ENCODE measurements at regions of chr9 and their contacts with region 1.

Region 1: DNA sequence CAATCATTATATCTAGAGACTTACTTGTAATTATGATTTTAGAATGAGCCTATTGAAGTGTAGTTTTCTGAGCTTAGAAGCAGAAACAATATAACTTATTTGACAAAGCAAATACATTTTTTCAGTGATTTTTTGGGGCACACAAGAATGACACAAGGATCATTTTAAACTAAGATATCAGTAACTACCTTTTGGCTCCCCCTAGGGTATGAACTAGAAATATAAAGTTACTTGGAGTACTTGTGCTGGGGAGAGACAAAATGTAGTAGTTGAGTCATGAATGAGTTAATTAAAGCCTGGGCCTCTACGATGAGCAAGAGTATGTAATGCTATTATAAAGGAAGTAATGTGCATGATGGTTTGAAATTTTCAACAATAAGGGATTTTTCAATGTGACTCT is 1244.1 kb upstream of the ACO1 start:
- DNase-seq: no peak
- ATAC-seq: no peak
- H3K4me3 ChIP-seq: no peak overlapping the region
- H3K27ac ChIP-seq: no peak overlapping the region
- H3K4me1 ChIP-seq: no peaks in the 10 kb centered on the region
- H3K27me3 ChIP-seq: no peaks in the 10 kb centered on the region
- CTCF ChIP-seq: no peak

Region 2: DNA sequence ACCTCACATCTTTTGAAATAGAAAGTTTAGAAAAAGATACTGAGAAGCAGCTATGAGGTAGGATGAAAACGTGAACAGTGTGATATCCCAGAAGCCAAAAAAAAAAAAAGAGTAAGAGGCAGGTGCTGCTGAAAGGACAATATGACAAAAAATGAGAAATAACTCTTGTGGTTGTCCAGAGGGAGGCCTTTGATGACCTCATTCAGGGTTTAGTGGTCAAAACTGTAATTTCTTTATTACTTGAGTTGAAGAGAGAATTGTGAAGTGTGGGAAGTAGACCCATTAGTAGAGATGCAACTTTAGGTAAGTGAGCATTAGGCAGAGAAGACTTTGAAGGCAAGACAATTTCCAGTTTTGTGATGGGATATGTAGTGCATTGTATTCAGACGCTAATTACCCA is 62.1 kb before region 1 on chr9:
- intact Hi-C with region 1: loop called in 1 of 2 experiments (anchors 2 kb)
- DNase-seq: no peak
- ATAC-seq: no peak
- H3K4me3 ChIP-seq: no peak overlapping the region
- H3K27ac ChIP-seq: no peak overlapping the region
- H3K4me1 ChIP-seq: no peaks in the 10 kb centered on the region
- H3K27me3 ChIP-seq: no peaks in the 10 kb centered on the region
- CTCF ChIP-seq: no peak

Region 3: GRCh38 chr9:31542384-31543055 is 402.2 kb after region 1 on chr9:
- intact Hi-C with region 1: no loop called
- DNase-seq: peak in 1 of 2 donors; percentile 26
- ATAC-seq: peak; percentile 90 to 98 (median 92)
- H3K4me3 ChIP-seq: peak overlapping the region; percentile 8
- H3K27ac ChIP-seq: no peak overlapping the region
- H3K4me1 ChIP-seq: no peaks in the 10 kb centered on the region
- H3K27me3 ChIP-seq: no peaks in the 10 kb centered on the region
- CTCF ChIP-seq: peak; percentile 36